Activated naive CD4-positive, alpha-beta T cell treated with anti-CD3 and anti-CD28 coated beads for 36 hours (primary cell): ENCODE measurements at regions of chr7 and their contacts with region 1.

Region 1: GRCh38 chr7:105691733-105692564 is 110.7 kb upstream of the EFCAB10 start:
- DNase-seq: peak; percentile 80
- H3K4me3 Mint-ChIP-seq: peak overlapping the region; percentile 77
- H3K27ac Mint-ChIP-seq: peak overlapping the region; percentile 79
- H3K4me1 Mint-ChIP-seq: peaks cover 36% of the 10 kb centered on the region
- H3K27me3 Mint-ChIP-seq: no peaks in the 10 kb centered on the region

Region 2: DNA sequence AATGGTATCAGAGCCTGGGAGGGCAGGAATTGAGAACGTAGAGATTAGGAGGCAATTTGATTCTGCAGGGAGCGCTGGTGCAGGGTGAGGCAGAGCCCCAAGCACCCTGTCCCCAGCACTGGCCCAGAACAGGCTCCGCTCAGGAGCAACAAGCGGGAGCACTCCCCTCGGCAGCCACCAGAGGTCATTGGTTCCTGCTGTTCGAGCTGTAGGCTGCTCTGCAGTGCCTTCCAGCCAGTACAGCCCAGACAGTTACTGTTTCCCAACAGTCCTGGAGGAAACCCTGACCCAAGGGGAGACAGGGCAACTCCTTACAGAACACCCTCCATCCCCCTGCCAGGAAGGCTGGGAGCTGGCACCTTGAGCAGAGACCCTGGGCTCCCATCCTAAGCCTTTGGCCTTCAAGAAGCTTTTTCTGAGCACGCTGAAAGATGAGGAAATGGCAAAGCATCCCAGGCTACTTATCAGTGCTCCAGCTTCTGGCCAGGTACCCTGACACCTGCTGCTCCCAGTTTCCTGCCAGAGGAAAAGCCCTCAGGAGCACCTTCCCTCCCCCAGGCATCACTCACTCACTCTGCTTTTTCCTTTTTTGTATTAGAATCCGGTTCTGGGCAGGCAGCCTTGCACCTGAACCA is 39.5 kb before region 1 on chr7:
- CTCF ChIA-PET with region 1: interaction called, 13 read pairs
- intact Hi-C with region 1: no loop called
- DNase-seq: peak; percentile 79
- H3K4me3 Mint-ChIP-seq: no peak overlapping the region
- H3K27ac Mint-ChIP-seq: no peak overlapping the region
- H3K4me1 Mint-ChIP-seq: peaks cover 10% of the 10 kb centered on the region
- H3K27me3 Mint-ChIP-seq: no peaks in the 10 kb centered on the region

Region 3: DNA sequence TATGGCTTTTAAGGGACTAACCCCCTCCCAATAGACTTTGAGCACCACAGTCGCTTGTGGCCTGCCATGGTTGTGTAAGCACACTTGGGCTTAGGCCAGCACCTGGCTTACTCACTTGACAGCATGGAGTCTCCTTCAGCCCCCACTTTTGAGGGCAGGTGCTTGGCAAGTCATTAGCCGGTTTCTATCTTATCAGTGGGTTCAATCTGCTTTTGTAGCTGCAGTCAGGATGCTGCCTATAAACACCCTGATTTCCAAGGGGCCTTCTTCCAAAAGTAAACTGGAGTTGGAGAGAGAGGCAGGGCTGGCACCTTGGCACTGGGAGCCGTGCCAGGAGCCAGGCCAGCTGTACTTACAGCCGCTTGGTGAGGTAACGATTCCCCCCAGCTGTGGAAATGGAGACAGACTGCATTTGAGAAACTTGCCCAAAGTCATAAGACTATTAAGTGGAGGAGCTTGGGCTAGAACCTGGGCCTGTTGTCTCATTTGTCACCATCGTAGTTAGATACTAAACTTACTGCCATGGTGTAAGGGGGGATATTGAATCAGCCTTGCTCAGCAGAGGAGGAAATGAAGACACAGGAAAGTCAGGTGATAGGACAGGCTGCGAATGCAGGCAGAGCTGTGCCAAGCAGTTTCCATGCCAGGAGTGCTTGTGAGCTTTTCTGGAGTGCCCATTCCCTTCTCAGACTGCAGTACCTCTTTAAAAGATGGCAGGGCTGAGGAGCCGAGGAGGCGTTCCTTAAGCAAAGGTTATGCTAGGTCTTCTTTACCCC is 18.4 kb before region 1 on chr7:
- CTCF ChIA-PET with region 1: interaction called, 4 read pairs
- intact Hi-C with region 1: loop called (anchors 1 kb)
- DNase-seq: peak; percentile 24
- H3K4me3 Mint-ChIP-seq: no peak overlapping the region
- H3K27ac Mint-ChIP-seq: peak overlapping the region; percentile 76
- H3K4me1 Mint-ChIP-seq: peaks cover 61% of the 10 kb centered on the region
- H3K27me3 Mint-ChIP-seq: no peaks in the 10 kb centered on the region

Region 4: DNA sequence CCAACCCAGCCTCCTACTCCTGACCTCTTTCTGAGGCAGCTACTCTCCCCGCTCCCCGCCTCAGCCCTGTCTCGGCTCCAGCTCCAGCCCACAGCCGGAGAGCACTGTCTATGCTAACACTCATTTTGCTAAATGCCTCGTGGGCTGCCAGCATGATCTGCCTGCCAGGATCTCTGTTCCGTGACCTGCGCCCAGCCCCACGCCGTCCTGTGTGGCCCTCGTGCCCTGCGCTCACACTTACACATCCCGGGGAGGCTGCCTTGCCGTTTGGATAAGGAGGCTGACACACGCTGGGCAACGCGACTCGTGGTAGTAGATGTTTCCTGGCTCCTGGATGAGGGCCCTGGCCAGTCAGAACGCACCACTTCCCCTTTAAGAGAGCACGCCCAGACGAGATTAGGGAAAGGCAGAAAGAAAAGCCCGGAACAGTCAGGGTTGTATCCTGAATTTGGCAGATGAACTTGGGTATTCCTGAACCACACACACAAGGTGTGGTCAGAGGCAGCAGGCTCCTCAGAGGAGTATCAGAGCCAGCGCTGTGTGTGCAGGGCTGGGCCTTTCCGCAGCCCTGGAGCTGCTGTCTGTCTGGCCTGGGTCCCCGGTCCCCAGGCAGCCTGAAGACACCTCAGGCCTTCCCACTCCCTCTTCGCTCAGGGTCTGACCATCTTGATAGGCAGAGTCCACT is 13.0 kb before region 1 on chr7:
- CTCF ChIA-PET with region 1: interaction called, 4 read pairs
- intact Hi-C with region 1: loop called (anchors 1 kb)
- DNase-seq: peak; percentile 60
- H3K4me3 Mint-ChIP-seq: peak overlapping the region; percentile 82
- H3K27ac Mint-ChIP-seq: peak overlapping the region; percentile 86
- H3K4me1 Mint-ChIP-seq: peaks cover 59% of the 10 kb centered on the region
- H3K27me3 Mint-ChIP-seq: no peaks in the 10 kb centered on the region

Region 5: GRCh38 chr7:105849122-105849855 is 157.3 kb after region 1 on chr7:
- CTCF ChIA-PET with region 1: no interaction called
- intact Hi-C with region 1: loop called (anchors 5 kb)
- DNase-seq: peak; percentile 83
- H3K4me3 Mint-ChIP-seq: no peak overlapping the region
- H3K27ac Mint-ChIP-seq: no peak overlapping the region
- H3K4me1 Mint-ChIP-seq: peaks cover 44% of the 10 kb centered on the region
- H3K27me3 Mint-ChIP-seq: no peaks in the 10 kb centered on the region

Region 6: DNA sequence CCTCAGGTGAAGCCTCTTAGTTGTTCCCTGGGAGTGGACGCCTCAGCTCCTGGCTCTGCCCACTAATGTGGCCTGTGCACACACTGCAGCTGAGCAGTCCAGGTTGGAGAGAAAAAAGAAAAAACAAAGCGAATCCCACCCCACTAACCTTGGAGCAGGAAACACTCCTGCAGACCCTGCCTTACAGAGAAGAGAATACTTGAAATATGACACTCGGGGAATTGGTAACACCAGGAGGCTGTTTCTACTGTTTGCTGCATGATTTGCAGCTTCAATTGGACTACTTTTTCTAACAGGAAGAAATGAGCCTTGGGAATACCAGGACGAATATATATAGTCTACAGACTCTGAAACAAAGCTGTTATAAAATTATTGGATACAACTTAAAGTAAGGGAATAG is 293.3 kb after region 1 on chr7:
- CTCF ChIA-PET with region 1: no interaction called
- intact Hi-C with region 1: no loop called
- DNase-seq: no peak
- H3K4me3 Mint-ChIP-seq: no peak overlapping the region
- H3K27ac Mint-ChIP-seq: no peak overlapping the region
- H3K4me1 Mint-ChIP-seq: no peaks in the 10 kb centered on the region
- H3K27me3 Mint-ChIP-seq: no peaks in the 10 kb centered on the region

Region 7: DNA sequence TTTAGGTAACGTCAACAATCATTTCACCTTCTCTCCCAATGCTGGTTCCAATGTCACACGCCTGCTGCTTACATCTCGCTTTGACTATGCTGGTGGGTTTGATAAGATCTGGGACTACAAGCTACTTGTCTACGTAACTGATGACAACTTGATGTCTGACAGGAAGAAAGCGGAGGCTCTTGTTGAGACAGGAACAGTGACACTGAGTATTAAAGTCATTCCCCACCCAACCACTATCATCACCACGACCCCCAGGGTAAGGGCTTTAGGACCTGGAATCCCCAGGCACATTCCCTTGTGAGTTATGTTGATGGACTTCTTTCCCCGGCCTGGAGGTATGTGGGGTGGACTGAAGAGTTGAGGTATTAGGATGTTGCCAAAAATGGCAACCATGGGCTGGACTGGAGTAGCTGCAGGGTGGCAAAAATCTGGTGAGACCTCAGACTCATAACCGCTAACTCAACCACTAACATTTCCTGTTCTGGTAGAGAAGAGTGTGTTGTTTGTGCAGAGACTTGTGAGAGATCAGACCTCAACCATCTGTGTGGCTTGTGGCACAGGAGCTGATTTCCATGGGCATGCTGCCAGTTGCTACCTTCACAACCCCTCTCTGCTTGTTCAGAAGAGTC is 330.4 kb after region 1 on chr7:
- CTCF ChIA-PET with region 1: no interaction called
- intact Hi-C with region 1: loop called (anchors 5 kb)
- DNase-seq: peak; percentile 82
- H3K4me3 Mint-ChIP-seq: peak overlapping the region; percentile 19
- H3K27ac Mint-ChIP-seq: peak overlapping the region; percentile 62
- H3K4me1 Mint-ChIP-seq: peaks cover 71% of the 10 kb centered on the region
- H3K27me3 Mint-ChIP-seq: no peaks in the 10 kb centered on the region